Gastrocnemius medialis (tissue), 4 donors: ENCODE measurements at regions of chr9 and their contacts with region 1.

Region 1: GRCh38 chr9:101738566-101739183 is at the start of gene GRIN3A:
- DNase-seq: no peak
- ATAC-seq: no peak
- H3K4me3 ChIP-seq: peak within 1 kb of the TSS; percentile 38 to 55 (median 44)
- H3K27ac ChIP-seq: no peak within 1 kb of the TSS
- H3K4me1 ChIP-seq: no peaks in the 10 kb centered on the region
- H3K27me3 ChIP-seq: peaks cover 30 to 49% (median 42%) of the 10 kb centered on the region in 3 donors
- CTCF ChIP-seq: no peak
- POLR2A ChIP-seq: no peak
- total RNA-seq, gene GRIN3A: not detected

Region 2: DNA sequence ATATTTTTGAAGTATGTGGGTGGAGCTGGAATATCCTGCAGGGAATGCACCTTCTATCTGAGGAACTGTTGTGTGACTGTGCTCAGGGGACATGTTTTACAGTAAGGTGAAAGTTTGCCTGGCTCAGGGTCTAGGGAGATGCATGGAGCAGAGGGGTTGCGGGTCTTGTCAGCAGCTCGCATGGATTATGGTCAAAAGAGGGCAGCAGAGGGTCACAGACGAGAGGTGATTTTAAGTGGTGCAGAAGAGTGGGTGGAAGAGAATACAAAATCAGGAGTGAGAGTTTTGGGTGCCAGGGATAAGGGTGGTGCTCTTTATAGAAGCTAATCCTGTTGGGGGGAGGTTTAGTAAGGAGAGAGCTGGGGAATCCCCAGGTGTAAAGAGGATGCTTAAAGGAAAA is 53.3 kb after region 1 on chr9:
- in situ Hi-C with region 1: loop called in 1 of 4 experiments (anchors 10 kb)
- intact Hi-C with region 1: no loop called
- DNase-seq: no peak
- ATAC-seq: no peak
- H3K4me3 ChIP-seq: no peak overlapping the region
- H3K27ac ChIP-seq: no peak overlapping the region
- H3K4me1 ChIP-seq: no peaks in the 10 kb centered on the region
- H3K27me3 ChIP-seq: no peaks in the 10 kb centered on the region
- CTCF ChIP-seq: no peak
- POLR2A ChIP-seq: no peak

Region 3: GRCh38 chr9:101957705-101958104 is 219.0 kb after region 1 on chr9:
- in situ Hi-C with region 1: no loop called
- intact Hi-C with region 1: no loop called
- DNase-seq: no peak
- ATAC-seq: no peak
- H3K4me3 ChIP-seq: no peak overlapping the region
- H3K27ac ChIP-seq: no peak overlapping the region
- H3K4me1 ChIP-seq: no peaks in the 10 kb centered on the region
- H3K27me3 ChIP-seq: no peaks in the 10 kb centered on the region
- CTCF ChIP-seq: no peak
- POLR2A ChIP-seq: no peak

Region 4: DNA sequence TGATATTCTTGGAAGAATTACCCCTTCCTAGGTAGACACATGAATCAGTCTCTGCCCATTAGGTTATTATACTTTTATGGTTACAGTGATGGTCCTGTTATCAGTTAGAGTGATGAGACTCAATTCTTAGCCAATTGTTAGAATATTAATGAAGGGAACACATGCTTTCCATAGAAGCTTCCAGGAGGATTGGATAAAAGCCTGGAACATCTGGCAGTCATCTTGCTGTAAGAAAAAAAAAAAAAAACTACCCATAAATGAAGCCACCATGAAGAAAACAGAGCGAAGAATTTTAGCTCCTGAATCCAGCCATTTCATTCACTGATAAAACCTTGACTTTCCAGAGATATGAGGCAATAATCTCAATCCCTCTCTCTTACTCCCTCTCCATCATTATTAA is 262.3 kb after region 1 on chr9:
- in situ Hi-C with region 1: no loop called
- intact Hi-C with region 1: no loop called
- DNase-seq: no peak
- ATAC-seq: no peak
- H3K4me3 ChIP-seq: no peak overlapping the region
- H3K27ac ChIP-seq: no peak overlapping the region
- H3K4me1 ChIP-seq: no peaks in the 10 kb centered on the region
- H3K27me3 ChIP-seq: no peaks in the 10 kb centered on the region
- CTCF ChIP-seq: no peak
- POLR2A ChIP-seq: no peak